ENCODE measurements at regions of chr1 and their contacts with region 1.

Region 1: GRCh38 chr1:186985889-186986491 is 157.2 kb downstream of the PLA2G4A start:
- DNase-seq: no peak
- ATAC-seq: peak; percentile 45

Region 2: GRCh38 chr1:186482661-186483255 is 503.2 kb before region 1 on chr1:
- intact Hi-C with region 1: loop called (anchors 5 kb)
- DNase-seq: peak; percentile 52
- ATAC-seq: no peak

Region 3: DNA sequence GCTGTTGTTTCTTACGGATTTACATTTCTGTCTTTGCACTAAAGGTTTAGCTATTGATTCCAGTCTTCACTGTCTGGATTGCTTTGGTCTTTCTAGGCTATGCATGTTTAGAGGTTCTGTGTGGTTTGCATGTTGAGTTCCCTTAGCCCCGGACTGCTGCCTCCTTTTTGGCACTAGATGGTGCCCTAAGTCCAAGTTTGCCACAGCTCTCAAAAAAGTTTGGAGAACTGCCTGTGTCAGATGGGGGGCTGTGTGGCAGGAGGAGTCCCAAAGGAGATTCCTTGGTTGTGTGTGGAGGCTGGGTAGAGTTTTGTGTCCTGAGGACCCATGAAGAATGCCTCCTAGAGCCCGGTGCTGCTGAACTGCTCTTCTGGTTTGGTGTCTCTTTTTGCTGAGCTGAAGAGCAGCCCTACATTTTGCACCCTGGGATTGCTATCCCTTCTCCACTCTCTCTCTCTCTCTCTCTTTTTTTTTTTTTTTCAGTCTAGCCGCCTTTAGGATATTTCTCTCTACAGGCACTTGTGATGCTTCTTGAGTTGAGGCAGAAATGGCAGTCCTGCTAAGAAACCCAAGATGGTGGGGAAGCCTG is 380.1 kb before region 1 on chr1:
- intact Hi-C with region 1: loop called (anchors 2 kb)
- DNase-seq: no peak
- ATAC-seq: peak; percentile 48

Region 4: DNA sequence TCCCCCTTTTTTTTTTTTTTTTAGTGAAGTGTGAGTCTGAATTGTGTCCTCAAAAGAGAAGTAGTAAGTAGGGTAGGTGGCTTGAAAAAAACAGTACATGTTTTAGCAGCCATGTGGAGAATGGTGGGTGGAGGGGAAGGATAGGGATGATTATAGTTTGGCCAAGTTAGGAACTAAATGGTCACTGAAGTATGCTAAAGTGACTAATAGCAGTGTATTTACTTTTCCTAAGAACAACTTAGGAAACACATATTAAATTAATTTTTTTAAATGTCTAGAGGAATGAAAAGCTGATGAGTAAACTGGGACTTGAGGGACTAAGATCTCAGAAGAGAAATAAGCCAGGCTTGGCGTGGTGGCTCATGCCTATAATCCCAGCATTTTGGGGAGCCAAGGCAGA is 101.7 kb before region 1 on chr1:
- intact Hi-C with region 1: no loop called
- DNase-seq: no peak
- ATAC-seq: no peak